Common myeloid progenitor, CD34-positive (primary cell): ENCODE measurements at regions of chr3 and their contacts with region 1.

Region 1: DNA sequence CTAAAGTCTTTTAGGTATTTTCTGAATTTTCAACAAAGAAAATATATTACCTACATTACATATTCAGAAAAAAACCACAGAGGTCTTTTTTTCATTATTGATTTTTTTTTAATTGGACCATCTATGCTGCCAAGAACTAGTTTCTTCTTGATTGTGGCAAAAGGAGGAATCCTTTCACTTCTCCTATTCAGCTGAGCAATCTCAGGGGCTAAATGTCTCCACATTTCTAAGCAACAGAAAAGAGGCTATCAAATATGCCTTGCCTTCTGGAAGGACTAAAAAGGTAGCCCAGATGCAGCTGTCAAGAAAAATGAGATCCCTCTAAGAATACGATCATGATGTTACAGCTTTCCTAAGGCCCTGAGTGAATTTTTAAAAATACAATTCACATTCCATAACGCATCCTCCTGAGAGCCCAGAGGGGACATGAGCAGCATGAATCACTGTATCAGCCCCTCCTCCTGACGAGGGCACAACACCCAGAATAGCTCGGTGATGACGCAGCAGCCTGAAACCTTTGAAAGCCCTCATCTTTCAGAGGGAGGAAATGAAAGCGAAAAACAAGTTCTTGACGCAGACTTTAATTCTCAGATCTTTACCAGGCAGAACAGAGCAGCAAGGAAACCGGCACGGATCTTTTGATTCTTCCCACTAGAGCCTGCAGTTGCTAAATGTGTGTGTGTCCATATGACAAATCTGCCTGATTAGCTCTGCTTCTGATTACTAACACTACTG is 24.6 kb downstream of the RUBCN start:
- DNase-seq: peak; percentile 93 to 97 (median 96)
- H3K4me3 ChIP-seq: peak overlapping the region in 6 of 7 experiments; percentile 50 to 81 (median 62)
- H3K27ac ChIP-seq: peak overlapping the region; percentile 79 to 93
- H3K4me1 ChIP-seq: peaks cover 8 to 26% (median 17%) of the 10 kb centered on the region in 4 experiments
- H3K27me3 ChIP-seq: no peaks in the 10 kb centered on the region

Region 2: DNA sequence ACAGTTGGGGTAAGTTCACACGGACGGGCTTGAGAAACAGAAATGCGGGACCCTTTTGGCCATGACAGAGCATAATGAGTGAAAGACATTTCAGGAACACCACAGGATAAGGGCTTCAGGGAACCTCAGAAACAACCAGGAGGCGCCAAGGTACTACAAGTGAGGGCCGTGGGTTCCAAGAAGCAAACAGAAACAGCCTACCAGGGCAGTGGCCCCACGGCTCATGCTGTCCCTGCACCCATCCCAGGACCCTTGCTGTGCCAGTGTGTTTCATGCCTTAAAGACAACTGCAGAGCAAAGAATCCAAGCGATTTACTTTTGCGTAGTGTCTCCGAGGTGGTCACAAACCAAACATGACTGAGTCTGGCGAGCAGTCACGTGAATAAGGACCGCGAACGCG is 29.4 kb before region 1 on chr3:
- CTCF ChIA-PET with region 1: interaction called, 10 read pairs
- POLR2A ChIA-PET with region 1: no interaction called
- DNase-seq: peak in 1 of 3 donors; percentile 14
- H3K4me3 ChIP-seq: no peak overlapping the region
- H3K27ac ChIP-seq: no peak overlapping the region
- H3K4me1 ChIP-seq: no peaks in the 10 kb centered on the region
- H3K27me3 ChIP-seq: no peaks in the 10 kb centered on the region

Region 3: DNA sequence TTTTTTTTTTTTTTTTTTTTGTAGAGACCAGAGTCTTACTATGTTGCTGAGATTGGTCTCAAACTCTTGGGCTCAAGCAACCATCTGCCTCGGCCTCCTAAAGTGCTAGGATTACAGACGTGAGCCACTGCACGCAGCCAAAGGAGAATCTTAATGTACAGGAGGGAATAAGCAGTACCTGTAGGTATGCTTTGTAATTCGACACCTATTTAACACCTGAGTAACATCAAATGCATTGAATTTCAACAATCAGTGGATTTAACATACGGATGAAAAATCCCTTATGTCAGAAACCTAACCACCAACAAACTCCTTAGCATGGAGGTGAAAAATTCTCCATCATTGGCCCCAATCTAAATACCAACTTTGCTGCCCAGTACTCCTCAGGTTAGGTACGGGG is 13.4 kb after region 1 on chr3:
- CTCF ChIA-PET with region 1: interaction called, 10 read pairs
- POLR2A ChIA-PET with region 1: interaction called, 3 read pairs
- DNase-seq: no peak
- H3K4me3 ChIP-seq: no peak overlapping the region
- H3K27ac ChIP-seq: no peak overlapping the region
- H3K4me1 ChIP-seq: peaks cover 0 to 6% (median 0%) of the 10 kb centered on the region in 4 experiments
- H3K27me3 ChIP-seq: no peaks in the 10 kb centered on the region